ENCODE measurements at regions of chr1 and their contacts with region 1.

Region 1: GRCh38 chr1:89987170-89987819 is 7.6 kb upstream of the ZNF326 start:
- DNase-seq: peak; percentile 68
- H3K4me3 Mint-ChIP-seq: no peak overlapping the region
- H3K27ac Mint-ChIP-seq: no peak overlapping the region
- H3K4me1 Mint-ChIP-seq: no peaks in the 10 kb centered on the region
- H3K27me3 Mint-ChIP-seq: peaks cover 21% of the 10 kb centered on the region

Region 2: DNA sequence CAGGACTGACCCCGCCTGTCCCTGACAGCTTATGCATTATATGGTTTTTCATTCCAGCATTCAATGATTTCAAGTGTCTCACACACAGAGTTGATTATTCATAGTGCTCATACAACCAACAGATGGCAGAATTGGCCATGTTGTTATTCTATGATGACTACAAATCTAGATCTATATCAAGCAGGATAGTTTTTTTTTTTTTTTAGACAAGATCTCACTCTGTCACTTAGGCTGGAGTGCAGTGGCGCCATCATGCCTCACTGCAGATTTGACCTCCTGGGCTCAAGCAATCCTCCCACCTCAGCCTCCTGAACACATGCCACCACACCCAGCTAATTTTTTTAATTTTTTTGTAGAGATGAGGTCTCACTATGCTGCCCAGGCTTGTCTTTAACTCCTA is 206.6 kb before region 1 on chr1:
- CTCF ChIA-PET with region 1: interaction called, 16 read pairs
- DNase-seq: no peak
- H3K4me3 Mint-ChIP-seq: no peak overlapping the region
- H3K27ac Mint-ChIP-seq: no peak overlapping the region
- H3K4me1 Mint-ChIP-seq: peaks cover 26% of the 10 kb centered on the region
- H3K27me3 Mint-ChIP-seq: peaks cover 8% of the 10 kb centered on the region

Region 3: DNA sequence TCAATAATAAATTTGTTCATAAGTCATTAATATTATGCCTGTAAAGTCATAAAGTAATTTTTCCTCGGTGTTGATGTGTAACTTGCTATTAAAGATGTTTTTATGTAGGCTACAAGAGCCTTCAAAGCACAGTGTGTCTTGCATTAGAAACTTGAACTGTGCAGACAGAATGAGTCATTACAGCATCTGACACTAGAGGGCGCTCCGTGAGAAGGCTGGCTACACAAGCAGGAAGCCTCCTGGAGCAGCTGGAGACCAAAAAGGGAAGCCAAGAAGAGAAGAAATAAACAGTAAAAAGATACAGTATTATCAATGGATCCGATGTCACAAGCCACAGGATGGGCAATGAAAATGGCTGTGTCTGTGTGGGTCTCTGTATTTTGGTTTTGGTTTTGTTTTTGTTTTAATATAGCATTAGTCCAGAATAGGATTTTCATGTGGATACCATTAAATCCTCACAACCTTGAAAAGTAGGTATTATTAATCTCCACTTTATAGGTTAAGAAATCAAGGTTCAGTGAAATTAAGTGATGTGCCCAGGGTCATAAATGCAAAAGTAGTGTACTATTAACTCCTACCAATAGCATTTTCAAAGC is 182.6 kb before region 1 on chr1:
- CTCF ChIA-PET with region 1: interaction called, 20 read pairs
- DNase-seq: peak; percentile 92
- H3K4me3 Mint-ChIP-seq: no peak overlapping the region
- H3K27ac Mint-ChIP-seq: no peak overlapping the region
- H3K4me1 Mint-ChIP-seq: peaks cover 2% of the 10 kb centered on the region
- H3K27me3 Mint-ChIP-seq: peaks cover 18% of the 10 kb centered on the region

Region 4: GRCh38 chr1:89843281-89844121 is 143.8 kb before region 1 on chr1:
- CTCF ChIA-PET with region 1: interaction called, 15 read pairs
- DNase-seq: peak; percentile 85
- H3K4me3 Mint-ChIP-seq: peak overlapping the region; percentile 94
- H3K27ac Mint-ChIP-seq: peak overlapping the region; percentile 94
- H3K4me1 Mint-ChIP-seq: peaks cover 57% of the 10 kb centered on the region
- H3K27me3 Mint-ChIP-seq: no peaks in the 10 kb centered on the region

Measured in activated naive CD4-positive, alpha-beta T cell treated with anti-CD3 and anti-CD28 coated beads, Interleukin-2, amount 10 ng/mL, durations not matched to agents 7 days and 5 days (primary cell).